MCF 10A (cell line): ENCODE measurements at regions of chr6 and their contacts with region 1.

Region 1: DNA sequence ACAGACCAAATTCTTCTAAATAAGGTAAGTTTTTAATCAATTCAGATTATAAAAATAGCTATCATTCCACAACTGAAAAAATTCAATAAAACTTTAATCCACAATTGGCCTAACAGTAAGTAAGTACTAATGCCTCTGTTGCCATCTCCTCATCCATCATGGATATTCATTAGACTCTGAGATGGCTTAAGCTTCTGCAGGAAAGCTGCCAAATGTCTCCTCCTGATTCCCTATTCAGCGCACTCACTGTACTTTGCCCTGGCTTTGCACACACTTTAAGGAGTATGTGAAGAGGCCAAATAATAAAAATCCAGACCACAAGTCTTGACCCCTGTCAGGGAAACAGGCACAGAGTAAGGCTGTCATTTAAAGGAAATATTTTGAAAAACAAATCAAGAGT is 23.6 kb downstream of the PGM3 start:
- DNase-seq: no peak
- H3K4me3 Mint-ChIP-seq: no peak overlapping the region
- H3K27ac Mint-ChIP-seq: no peak overlapping the region
- H3K4me1 Mint-ChIP-seq: no peaks in the 10 kb centered on the region
- H3K27me3 Mint-ChIP-seq: no peaks in the 10 kb centered on the region
- CTCF ChIP-seq: no peak

Region 2: DNA sequence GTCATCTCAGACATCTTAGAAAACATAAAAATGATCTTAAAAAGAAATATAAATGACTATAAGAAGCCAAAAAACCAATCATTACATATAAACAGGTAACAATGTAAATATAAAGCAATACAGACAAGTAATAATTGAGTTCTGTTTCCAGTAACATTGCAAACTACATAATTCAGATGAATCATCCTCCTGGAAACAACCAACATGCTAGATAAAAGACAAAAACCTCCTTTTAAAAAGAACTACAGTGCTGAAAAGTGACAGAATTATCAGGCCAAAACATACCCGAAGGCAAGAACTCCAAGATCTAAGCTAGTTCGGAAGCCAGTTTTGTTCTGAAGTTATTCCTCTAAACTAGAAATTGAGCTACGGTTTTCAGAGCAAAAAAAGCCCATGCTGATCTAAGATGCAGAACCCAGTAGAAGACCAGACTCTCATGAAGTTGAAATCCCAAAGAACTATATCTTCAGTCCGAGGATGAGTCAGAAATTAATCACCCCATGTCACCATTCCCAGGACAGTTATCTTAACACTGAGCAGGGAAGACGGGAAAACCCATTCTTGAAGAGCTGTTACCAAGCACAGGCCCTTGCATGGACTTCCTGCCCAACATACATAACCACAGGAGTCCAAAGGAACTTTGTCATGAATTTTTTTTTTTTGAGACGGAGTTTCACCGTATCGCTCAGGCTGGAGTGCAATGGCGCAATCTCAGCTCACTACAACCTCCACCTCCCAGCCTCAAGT is 13.7 kb after region 1 on chr6:
- CTCF ChIA-PET with region 1: interaction called, 4 read pairs
- POLR2A ChIA-PET with region 1: interaction called, 12 read pairs
- intact Hi-C with region 1: no loop called
- DNase-seq: peak; percentile 91
- H3K4me3 Mint-ChIP-seq: peak overlapping the region; percentile 12
- H3K27ac Mint-ChIP-seq: peak overlapping the region; percentile 74
- H3K4me1 Mint-ChIP-seq: peaks cover 30% of the 10 kb centered on the region
- H3K27me3 Mint-ChIP-seq: no peaks in the 10 kb centered on the region
- CTCF ChIP-seq: no peak